ENCODE measurements at regions of chr9 and their contacts with region 1.

Region 1: DNA sequence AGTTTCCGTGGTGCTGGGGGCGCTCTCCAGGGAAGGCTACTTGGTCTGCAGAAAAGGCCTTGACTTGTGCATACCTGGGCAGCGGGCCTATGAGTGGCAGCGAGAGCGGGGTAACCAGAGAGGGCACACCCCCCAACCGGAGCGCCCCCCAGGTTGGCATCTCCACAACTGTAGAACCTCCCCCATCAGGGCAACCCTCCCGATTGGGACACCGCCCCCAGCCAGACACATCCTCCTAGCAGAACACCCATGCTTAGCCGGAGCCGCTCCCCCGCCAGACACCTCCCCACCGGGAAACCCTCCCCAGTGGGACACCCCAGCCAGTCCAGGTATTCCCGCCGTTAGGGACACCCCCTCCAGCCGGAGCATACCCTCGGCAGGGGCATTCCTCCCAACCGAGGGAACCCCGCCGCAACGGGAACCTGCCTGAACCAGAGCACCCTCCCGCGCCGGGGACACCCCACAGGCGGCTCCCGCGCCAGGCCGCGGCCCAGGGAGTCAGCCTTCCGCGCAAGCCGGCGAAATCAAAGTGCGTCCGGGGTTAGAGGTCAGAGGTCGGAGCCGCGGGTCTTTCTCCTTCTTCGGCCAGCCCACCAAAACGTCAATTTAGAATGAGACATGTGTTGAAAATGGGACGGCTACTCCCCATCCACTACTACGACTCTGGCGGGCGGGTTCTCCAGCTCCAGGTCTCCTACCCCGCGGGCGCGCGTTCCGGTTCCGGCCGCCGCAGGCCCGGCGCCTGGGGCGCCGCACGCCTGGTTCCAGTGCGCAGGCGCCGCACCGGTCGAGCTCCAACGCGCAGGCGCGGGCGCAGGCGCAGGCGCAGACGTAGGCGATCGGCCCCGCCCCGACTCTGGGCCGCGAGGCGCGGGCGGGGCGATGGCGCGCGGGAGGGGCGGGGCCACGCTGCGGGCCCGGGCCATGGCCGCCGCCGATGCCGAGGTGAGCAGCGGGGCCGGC is at the start of gene EHMT1:
- DNase-seq: peak; percentile 87
- H3K4me3 Mint-ChIP-seq: peak within 1 kb of the TSS; percentile 93
- H3K27ac Mint-ChIP-seq: peak within 1 kb of the TSS; percentile 89
- H3K4me1 Mint-ChIP-seq: peaks cover 38% of the 10 kb centered on the region
- H3K27me3 Mint-ChIP-seq: no peaks in the 10 kb centered on the region
- total RNA-seq, gene EHMT1: 57.9 to 59.0 TPM

Region 2: DNA sequence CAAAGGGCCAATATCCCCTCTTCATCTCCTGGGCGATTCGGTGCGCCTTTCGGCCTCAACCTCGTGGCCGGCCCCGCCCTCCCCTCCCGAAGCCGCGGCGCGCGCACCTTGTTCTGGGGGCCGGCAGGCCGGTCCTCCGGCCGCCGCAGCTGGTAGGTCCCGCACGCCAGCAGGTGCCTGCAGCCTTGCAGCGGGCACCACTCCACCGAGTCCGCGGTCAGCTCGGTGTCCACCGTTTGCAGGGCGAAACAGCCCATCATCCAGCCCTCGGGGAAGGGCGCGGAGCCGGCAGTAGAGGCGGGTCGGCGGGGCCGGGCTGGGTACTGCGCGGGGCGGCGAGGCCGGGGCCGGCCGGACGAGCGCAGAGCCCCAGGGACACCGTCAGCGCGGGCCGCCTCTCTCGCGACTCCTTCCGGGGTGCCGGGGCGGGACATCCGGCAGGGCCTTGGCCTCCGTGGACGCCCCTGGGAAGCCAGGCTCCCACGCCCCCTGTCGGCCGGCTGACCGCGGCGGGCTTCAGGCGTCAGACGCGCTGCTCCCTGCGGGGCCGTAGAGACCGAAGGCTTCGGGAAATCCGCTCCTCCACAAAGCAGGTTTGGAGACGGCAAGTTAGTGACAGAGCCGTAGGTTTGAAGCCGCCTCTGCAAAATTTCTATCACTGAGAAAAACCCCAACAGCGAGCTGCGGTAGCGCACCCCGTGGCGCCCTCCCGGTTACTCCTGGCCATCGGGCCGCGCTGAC is 39.7 kb before region 1 on chr9 and contains the start of gene DPH7:
- CTCF ChIA-PET with region 1: no interaction called
- intact Hi-C with region 1: loop called (anchors 1 kb)
- DNase-seq: peak; percentile 96
- H3K4me3 Mint-ChIP-seq: peak within 1 kb of the TSS; percentile 81
- H3K27ac Mint-ChIP-seq: no peak within 1 kb of the TSS
- H3K4me1 Mint-ChIP-seq: peaks cover 37% of the 10 kb centered on the region
- H3K27me3 Mint-ChIP-seq: no peaks in the 10 kb centered on the region
- total RNA-seq, gene DPH7: 32.4 to 36.6 TPM

Region 3: DNA sequence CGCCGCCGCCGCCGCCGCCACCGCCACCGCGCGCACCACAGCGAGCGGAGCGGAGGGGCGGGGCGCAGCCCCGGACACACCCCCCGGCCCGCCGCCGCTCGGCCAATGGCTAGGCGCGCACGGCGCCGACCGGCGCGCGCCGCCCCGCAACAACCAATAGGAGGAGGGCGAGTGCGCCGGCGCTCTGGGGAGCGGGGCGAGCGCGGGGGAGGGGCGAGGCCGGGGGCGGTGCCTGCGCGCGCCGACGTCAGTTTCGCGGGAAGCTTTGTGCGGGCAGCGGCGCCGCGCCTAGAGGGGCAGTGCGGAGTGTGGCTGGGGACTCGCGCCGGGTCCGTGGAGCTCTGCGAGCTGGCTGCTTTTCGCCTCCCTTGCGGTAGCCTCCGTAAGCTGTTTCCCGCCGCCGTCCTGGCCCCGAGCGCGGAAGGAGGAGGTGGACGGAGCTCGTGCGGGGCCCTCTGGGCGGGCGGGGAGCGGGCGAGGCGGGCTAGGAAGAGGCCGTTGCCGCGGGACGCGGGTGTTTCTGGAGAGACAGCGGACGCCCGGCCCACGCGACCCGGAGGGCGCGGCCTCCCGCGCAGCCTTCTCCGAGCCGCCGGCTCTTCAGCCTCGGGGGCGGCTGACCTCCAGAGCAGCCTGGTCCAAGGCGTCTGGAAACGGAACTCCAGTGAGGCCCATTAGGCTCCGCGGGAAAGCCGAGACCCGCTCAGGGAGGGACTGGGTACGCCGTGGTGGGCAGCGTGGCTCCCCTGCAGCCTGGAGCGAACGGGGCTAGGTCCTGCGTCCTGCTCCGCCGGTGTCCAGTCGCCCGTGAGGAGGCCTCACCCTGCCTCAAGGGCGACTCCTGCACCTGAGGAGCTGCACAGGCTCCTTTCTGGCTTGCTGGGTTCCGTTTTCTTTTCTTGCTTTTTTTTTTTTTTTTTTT is 27.7 kb before region 1 on chr9 and contains the start of gene ZMYND19:
- CTCF ChIA-PET with region 1: no interaction called
- intact Hi-C with region 1: loop called (anchors 2 kb)
- DNase-seq: peak; percentile 88
- H3K4me3 Mint-ChIP-seq: peak within 1 kb of the TSS; percentile 97
- H3K27ac Mint-ChIP-seq: peak within 1 kb of the TSS; percentile 89
- H3K4me1 Mint-ChIP-seq: peaks cover 21% of the 10 kb centered on the region
- H3K27me3 Mint-ChIP-seq: no peaks in the 10 kb centered on the region
- total RNA-seq, gene ZMYND19: 50.9 to 52.5 TPM

Region 4: DNA sequence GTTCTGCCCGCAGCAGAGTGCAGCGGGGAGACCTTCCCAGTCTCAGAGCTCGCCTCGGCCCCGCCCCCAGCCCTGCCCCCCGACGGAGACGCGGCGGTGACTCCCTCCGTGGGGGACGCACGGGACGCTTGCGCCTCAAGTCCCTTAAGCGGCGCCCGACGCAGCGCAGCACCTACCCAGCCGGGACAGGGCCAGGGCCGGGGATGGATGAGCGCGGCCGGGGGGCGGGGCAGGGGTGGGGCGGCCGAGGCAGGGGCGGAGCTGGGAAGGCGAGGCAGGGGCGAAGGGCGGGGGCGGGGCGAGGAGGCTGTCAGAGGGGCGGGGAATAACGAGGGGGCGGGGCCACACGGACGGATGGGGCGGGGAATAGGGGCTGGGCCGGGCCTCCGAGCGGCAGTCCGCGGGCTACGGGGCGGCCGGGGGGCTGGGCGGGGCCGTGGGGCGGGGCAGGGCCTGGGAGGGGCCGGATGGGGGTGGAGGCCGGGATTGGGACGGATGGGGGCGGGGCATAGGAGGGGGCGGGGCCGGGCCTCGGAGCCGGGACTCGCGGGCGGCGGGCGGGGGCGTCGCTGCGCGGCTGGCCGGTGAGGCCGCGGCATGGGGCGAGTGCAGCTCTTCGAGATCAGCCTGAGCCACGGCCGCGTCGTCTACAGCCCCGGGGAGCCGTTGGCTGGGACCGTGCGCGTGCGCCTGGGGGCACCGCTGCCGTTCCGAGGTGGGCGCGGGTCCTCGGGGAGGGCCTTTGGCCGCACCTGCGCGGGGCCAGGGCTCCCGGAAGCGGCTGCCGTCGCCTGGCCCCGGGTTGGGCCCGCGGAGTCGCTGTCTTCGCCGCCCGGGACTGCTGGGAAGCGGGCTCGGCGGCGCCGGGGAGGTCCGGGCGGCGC is 13.0 kb before region 1 on chr9 and contains the start of gene ARRDC1:
- CTCF ChIA-PET with region 1: no interaction called
- intact Hi-C with region 1: loop called (anchors 1 kb)
- DNase-seq: peak; percentile 93
- H3K4me3 Mint-ChIP-seq: peak within 1 kb of the TSS; percentile 75
- H3K27ac Mint-ChIP-seq: no peak within 1 kb of the TSS
- H3K4me1 Mint-ChIP-seq: peaks cover 13% of the 10 kb centered on the region
- H3K27me3 Mint-ChIP-seq: no peaks in the 10 kb centered on the region
- total RNA-seq, gene ARRDC1: 19.1 to 21.4 TPM

Region 5: GRCh38 chr9:137632230-137633161 is 14.1 kb after region 1 on chr9:
- CTCF ChIA-PET with region 1: interaction called, 5 read pairs
- intact Hi-C with region 1: loop called (anchors 1 kb)
- DNase-seq: no peak
- H3K4me3 Mint-ChIP-seq: no peak overlapping the region
- H3K27ac Mint-ChIP-seq: no peak overlapping the region
- H3K4me1 Mint-ChIP-seq: peaks cover 70% of the 10 kb centered on the region
- H3K27me3 Mint-ChIP-seq: no peaks in the 10 kb centered on the region

Region 6: DNA sequence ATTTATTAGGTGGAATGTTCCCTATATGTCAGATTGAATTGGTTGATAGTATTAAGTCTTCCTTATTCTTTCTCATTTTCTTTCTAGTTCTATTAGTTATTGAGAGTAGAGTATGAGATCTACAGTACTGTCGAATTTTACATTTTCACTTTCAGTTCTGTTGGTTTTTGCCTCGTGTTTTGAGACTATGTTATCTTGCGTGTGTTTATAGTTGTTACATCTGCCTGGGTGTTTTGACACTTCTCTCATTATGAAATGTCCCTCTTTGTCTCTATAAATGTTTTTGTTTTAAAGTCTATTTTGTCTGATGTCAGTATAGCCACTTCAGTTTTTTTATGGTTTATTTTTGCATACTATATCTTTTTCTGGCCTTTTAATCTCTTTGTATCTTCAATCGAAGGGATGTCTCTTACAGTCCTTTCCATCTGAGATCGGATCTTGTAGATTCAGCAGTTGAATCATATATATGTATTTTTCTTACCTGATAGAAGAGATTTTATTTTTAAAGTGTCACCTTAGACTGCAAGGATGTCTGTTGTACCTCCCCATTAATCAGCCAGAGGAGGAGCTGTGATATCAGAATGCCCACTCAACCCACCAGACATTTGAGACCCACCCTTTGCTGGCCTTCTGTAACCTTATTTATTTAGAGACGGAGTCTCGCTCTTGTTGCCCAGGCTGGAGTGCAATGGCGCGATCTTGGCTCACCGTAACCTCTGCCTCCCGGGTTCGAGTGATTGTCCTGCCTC is 21.1 kb after region 1 on chr9:
- CTCF ChIA-PET with region 1: interaction called, 4 read pairs
- intact Hi-C with region 1: loop called (anchors 2 kb)
- DNase-seq: no peak
- H3K4me3 Mint-ChIP-seq: peak overlapping the region; percentile 67
- H3K27ac Mint-ChIP-seq: peak overlapping the region; percentile 79
- H3K4me1 Mint-ChIP-seq: peaks cover 47% of the 10 kb centered on the region
- H3K27me3 Mint-ChIP-seq: no peaks in the 10 kb centered on the region

Measured in activated naive CD4-positive, alpha-beta T cell treated with anti-CD3 and anti-CD28 coated beads for 36 hours (primary cell).